ENCODE measurements at regions of chr12 and their contacts with region 1.

Region 1: GRCh38 chr12:9118158-9118557 is 2.4 kb upstream of the A2M start:
- DNase-seq: no peak
- ATAC-seq: no peak
- H3K4me3 ChIP-seq: no peak overlapping the region
- H3K27ac ChIP-seq: no peak overlapping the region
- H3K4me1 ChIP-seq: peaks cover 76% of the 10 kb centered on the region
- H3K27me3 ChIP-seq: no peaks in the 10 kb centered on the region; a peak in 1 of 5 replicates
- CTCF ChIP-seq: no peak
- EP300 ChIP-seq: no peak
- POLR2A ChIP-seq: no peak
- RAD21 ChIP-seq: no peak

Region 2: DNA sequence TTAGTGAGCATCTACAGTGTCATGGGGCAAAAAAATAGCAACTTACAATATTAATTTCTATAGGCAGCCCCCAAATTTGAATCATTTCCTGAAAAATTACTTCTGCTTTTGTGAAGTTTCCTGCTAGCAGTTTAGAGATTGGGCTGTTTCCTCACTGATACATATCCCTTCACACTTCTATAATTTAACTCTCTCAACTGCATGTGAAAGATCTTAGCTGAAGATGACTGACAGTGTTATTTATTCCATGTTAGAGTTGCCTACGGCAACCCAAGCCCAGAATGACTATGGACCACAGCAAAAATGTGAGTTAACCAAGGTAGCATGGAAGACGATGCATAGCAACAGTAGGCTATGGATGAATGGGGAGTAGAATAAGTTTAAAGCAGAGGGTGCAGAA is 128.7 kb before region 1 on chr12 and contains the start of gene KLRG1:
- CTCF ChIA-PET with region 1: no interaction called
- POLR2A ChIA-PET with region 1: no interaction called
- in situ Hi-C with region 1: no loop called
- intact Hi-C with region 1: no loop called
- DNase-seq: no peak
- ATAC-seq: no peak
- H3K4me3 ChIP-seq: no peak within 1 kb of the TSS
- H3K27ac ChIP-seq: no peak within 1 kb of the TSS
- H3K4me1 ChIP-seq: peaks cover 12% of the 10 kb centered on the region
- H3K27me3 ChIP-seq: no peaks in the 10 kb centered on the region
- CTCF ChIP-seq: no peak
- EP300 ChIP-seq: no peak
- POLR2A ChIP-seq: no peak
- RAD21 ChIP-seq: no peak
- total RNA-seq, gene KLRG1: 1.2 and 1.6 TPM in 2 replicates

Region 3: GRCh38 chr12:9064201-9064814 is 53.9 kb before region 1 on chr12:
- CTCF ChIA-PET with region 1: no interaction called
- POLR2A ChIA-PET with region 1: interaction called, 56 read pairs
- in situ Hi-C with region 1: no loop called
- intact Hi-C with region 1: no loop called
- DNase-seq: peak; percentile 65
- ATAC-seq: peak; percentile 42
- H3K4me3 ChIP-seq: peak overlapping the region; percentile 84 to 90 (median 89)
- H3K27ac ChIP-seq: peak overlapping the region; percentile 95
- H3K4me1 ChIP-seq: peaks cover 44% of the 10 kb centered on the region
- H3K27me3 ChIP-seq: no peaks in the 10 kb centered on the region; a peak in 1 of 5 replicates
- CTCF ChIP-seq: peak; percentile 81
- EP300 ChIP-seq: no peak
- POLR2A ChIP-seq: peak; percentile 13 to 35; a peak in 1 of 4 replicates
- RAD21 ChIP-seq: peak; percentile 54

Region 4: GRCh38 chr12:9103050-9103849 is 14.9 kb before region 1 on chr12:
- CTCF ChIA-PET with region 1: no interaction called
- POLR2A ChIA-PET with region 1: interaction called, 14 read pairs
- in situ Hi-C with region 1: no loop called
- intact Hi-C with region 1: no loop called
- DNase-seq: no peak
- ATAC-seq: no peak
- H3K4me3 ChIP-seq: no peak overlapping the region
- H3K27ac ChIP-seq: no peak overlapping the region
- H3K4me1 ChIP-seq: peaks cover 27% of the 10 kb centered on the region
- H3K27me3 ChIP-seq: no peaks in the 10 kb centered on the region
- CTCF ChIP-seq: no peak
- EP300 ChIP-seq: no peak
- POLR2A ChIP-seq: peak; percentile 28 to 40; a peak in 2 of 4 replicates
- RAD21 ChIP-seq: no peak

Region 5: GRCh38 chr12:9134981-9135628 is 16.9 kb after region 1 on chr12:
- CTCF ChIA-PET with region 1: no interaction called
- POLR2A ChIA-PET with region 1: interaction called, 129 read pairs
- in situ Hi-C with region 1: no loop called
- intact Hi-C with region 1: loop called (anchors 1 kb)
- DNase-seq: peak; percentile 56
- ATAC-seq: peak; percentile 61
- H3K4me3 ChIP-seq: peak overlapping the region in 1 of 3 experiments; percentile 49; a peak in 1 of 6 replicates
- H3K27ac ChIP-seq: peak overlapping the region; percentile 96
- H3K4me1 ChIP-seq: peaks cover 71% of the 10 kb centered on the region
- H3K27me3 ChIP-seq: no peaks in the 10 kb centered on the region
- CTCF ChIP-seq: peak; percentile 67
- EP300 ChIP-seq: no peak
- POLR2A ChIP-seq: no peak
- RAD21 ChIP-seq: peak; percentile 34

Region 6: DNA sequence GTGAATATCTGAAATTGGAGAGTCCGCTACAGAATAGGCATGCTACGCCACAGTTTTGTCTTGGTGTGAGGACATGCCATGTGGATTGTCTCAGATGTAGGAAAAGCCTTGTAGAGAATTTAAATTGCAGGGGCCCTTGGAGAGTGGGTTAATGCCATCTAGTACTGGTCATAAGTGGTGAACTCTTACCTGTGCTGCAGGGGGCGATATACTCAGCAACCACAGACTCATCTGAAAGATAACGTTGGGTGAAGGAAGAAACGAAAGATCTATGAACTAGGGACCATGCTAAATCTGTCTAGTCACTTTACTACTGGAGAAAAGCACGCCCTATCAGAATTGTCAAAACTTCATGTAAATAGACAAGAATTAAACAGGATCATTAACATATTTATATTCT is 31.2 kb after region 1 on chr12:
- CTCF ChIA-PET with region 1: no interaction called
- POLR2A ChIA-PET with region 1: no interaction called
- in situ Hi-C with region 1: no loop called
- intact Hi-C with region 1: no loop called
- DNase-seq: no peak
- ATAC-seq: no peak
- H3K4me3 ChIP-seq: no peak overlapping the region
- H3K27ac ChIP-seq: no peak overlapping the region
- H3K4me1 ChIP-seq: no peaks in the 10 kb centered on the region
- H3K27me3 ChIP-seq: no peaks in the 10 kb centered on the region
- CTCF ChIP-seq: no peak
- EP300 ChIP-seq: no peak
- POLR2A ChIP-seq: no peak
- RAD21 ChIP-seq: no peak

Region 7: DNA sequence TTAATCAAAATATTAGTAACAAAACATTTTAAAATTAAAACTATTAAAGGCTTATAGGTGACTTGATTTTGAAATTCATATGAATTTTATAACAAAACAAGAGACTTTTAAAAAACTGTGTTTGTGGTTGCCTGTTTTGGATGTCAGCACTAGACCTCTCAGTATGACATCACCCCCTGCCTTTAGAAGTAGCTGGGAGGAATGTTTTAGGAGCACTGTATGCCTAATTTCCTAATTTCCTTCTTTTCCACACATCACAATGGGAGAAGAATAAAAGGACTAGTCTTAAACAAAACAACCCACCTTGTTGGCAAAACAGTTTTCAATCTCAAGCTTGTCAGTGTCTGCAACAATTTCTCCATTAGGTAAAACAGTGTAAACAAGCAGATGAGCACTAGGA is 138.2 kb after region 1 on chr12:
- CTCF ChIA-PET with region 1: no interaction called
- POLR2A ChIA-PET with region 1: interaction called, 3 read pairs
- in situ Hi-C with region 1: no loop called
- intact Hi-C with region 1: loop called (anchors 10 kb)
- DNase-seq: no peak
- ATAC-seq: no peak
- H3K4me3 ChIP-seq: no peak overlapping the region
- H3K27ac ChIP-seq: no peak overlapping the region
- H3K4me1 ChIP-seq: peaks cover 30% of the 10 kb centered on the region
- H3K27me3 ChIP-seq: no peaks in the 10 kb centered on the region
- CTCF ChIP-seq: no peak
- EP300 ChIP-seq: no peak
- POLR2A ChIP-seq: no peak
- RAD21 ChIP-seq: no peak

Region 8: DNA sequence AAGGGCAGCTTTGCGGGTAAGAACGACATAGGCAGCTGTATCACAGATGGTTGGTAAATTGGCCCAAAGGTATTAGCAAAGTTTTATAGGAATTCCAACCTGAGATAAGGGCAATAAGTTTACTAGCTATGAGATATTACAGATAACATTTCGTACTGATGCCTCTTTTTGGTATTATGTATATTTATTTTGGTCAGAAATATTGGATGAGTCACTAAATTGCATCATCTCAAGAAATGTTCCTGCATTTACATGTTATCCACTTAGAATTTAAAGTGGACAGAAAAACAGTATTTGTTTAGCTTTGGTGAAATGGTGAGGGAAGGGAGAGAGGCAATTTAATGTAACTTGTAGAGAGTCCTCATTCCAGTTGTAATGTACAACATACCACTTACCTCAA is 155.1 kb after region 1 on chr12:
- CTCF ChIA-PET with region 1: no interaction called
- POLR2A ChIA-PET with region 1: no interaction called
- in situ Hi-C with region 1: loop called (anchors 10 kb)
- intact Hi-C with region 1: no loop called
- DNase-seq: no peak
- ATAC-seq: no peak
- H3K4me3 ChIP-seq: no peak overlapping the region
- H3K27ac ChIP-seq: no peak overlapping the region
- H3K4me1 ChIP-seq: no peaks in the 10 kb centered on the region
- H3K27me3 ChIP-seq: no peaks in the 10 kb centered on the region; a peak in 1 of 5 replicates
- CTCF ChIP-seq: no peak
- EP300 ChIP-seq: no peak
- POLR2A ChIP-seq: no peak
- RAD21 ChIP-seq: no peak

Region 9: DNA sequence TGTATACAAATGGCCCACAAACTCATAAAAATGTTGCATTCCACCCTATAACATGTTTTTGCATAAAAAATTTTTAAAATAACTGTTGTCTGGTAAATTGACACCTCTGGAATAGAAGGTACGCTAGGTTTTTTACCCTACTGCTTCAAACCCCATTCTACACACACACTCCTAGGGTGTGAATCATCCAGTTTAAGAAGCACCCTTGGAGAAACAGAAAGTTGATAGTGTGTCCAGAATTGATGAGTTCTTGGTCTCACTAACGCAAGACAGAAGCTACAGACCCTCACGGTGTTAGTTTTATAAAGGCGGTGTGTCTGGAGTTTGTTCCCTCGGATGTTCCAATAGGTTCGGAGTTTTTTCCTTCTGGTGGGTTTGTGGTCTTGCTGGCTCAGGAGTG is 331.0 kb after region 1 on chr12:
- CTCF ChIA-PET with region 1: no interaction called
- POLR2A ChIA-PET with region 1: interaction called, 10 read pairs
- in situ Hi-C with region 1: no loop called
- intact Hi-C with region 1: no loop called
- DNase-seq: no peak
- ATAC-seq: no peak
- H3K4me3 ChIP-seq: peak overlapping the region; percentile 69 to 81 (median 74)
- H3K27ac ChIP-seq: peak overlapping the region; percentile 37
- H3K4me1 ChIP-seq: no peaks in the 10 kb centered on the region
- H3K27me3 ChIP-seq: no peaks in the 10 kb centered on the region
- CTCF ChIP-seq: no peak
- EP300 ChIP-seq: no peak
- POLR2A ChIP-seq: no peak
- RAD21 ChIP-seq: no peak

Measured in HepG2 (cell line).